ENCODE measurements at regions of chr6 and their contacts with region 1.

Region 1: GRCh38 chr6:56445818-56446217 is 196.9 kb downstream of the DST start:
- DNase-seq: no peak
- H3K4me3 ChIP-seq: no peak overlapping the region
- H3K27ac ChIP-seq: no peak overlapping the region
- H3K4me1 ChIP-seq: no peaks in the 10 kb centered on the region
- H3K27me3 ChIP-seq: no peaks in the 10 kb centered on the region
- CTCF ChIP-seq: no peak
- POLR2A ChIP-seq: no peak

Region 2: DNA sequence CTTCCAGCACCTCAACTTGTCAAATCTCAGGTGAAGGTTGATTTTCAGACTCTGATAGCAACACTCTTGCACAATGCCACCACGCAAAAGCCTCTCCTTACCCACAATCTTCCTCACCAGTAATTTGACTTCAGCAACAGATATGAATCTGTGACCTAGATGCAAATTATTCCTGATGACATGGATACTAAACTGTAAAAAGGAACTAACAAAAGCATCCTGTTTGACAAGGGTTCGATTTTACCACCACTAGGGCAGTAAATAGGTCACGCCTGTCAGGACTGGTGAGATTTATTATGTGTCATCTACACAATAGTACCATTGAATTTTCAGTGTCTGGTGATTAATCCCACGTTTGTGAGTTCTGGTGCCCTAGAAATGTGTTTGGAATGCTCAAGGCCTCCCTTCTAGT is 64.0 kb before region 1 on chr6:
- intact Hi-C with region 1: loop called (anchors 5 kb)
- DNase-seq: no peak
- H3K4me3 ChIP-seq: no peak overlapping the region
- H3K27ac ChIP-seq: no peak overlapping the region
- H3K4me1 ChIP-seq: no peaks in the 10 kb centered on the region
- H3K27me3 ChIP-seq: no peaks in the 10 kb centered on the region
- CTCF ChIP-seq: no peak
- POLR2A ChIP-seq: no peak

Measured in prostate gland (tissue), 2 donors.